Cardiac septum (tissue), 1 donor: ENCODE measurements at regions of chr2 and their contacts with region 1.

Region 1: GRCh38 chr2:161160226-161161069 is at the start of gene TANK:
- DNase-seq: peak; percentile 96
- total RNA-seq, gene TANK: 30.1 TPM

Region 2: DNA sequence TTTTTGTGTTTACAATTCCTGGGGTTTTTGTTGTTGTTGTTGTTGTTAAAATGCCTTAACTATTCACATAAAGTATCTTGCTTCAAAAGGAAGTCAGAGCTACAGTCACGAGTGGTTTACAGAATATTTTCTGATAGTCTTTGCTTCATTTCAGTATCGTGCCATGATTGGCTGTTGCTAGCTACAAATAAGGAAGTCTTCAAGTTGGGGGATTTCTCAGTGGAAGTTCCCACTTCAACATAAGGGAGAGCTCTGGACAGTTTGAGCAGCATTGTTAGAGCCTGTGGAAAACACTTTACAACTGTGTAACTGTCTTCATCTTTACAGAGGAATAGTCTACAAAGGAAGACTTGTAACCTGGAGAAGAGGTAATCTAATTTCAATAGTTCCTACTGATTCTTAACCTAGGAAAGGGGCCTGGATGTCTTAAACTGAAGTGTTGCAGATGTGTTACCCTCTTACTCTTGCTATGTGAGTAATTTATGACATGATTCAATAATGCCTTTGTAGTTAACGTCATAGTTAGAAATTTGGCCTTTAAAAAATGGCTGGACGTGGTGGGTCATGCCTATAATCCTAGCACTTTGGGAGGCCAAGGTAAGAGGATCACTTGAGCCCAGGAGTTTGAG is 23.6 kb before region 1 on chr2:
- intact Hi-C with region 1: no loop called
- DNase-seq: no peak

Region 3: GRCh38 chr2:161199912-161200701 is 39.7 kb after region 1 on chr2:
- intact Hi-C with region 1: no loop called
- DNase-seq: no peak

Region 4: GRCh38 chr2:161308178-161308955 is 147.9 kb after region 1 on chr2 and contains the start of gene PSMD14:
- intact Hi-C with region 1: loop called (anchors 5 kb)
- DNase-seq: peak; percentile 98
- total RNA-seq, gene PSMD14: 46.0 TPM